ENCODE measurements at regions of chr19 and their contacts with region 1.

Region 1: GRCh38 chr19:45770192-45771101 is 1.4 kb upstream of the SIX5 start:
- DNase-seq: peak; percentile 86
- H3K4me3 ChIP-seq: peak overlapping the region; percentile 58
- CTCF ChIP-seq: peak; percentile 93

Region 2: GRCh38 chr19:45692187-45693105 is 78.0 kb before region 1 on chr19 and contains the start of gene QPCTL:
- CTCF ChIA-PET with region 1: interaction called, 30 read pairs
- POLR2A ChIA-PET with region 1: interaction called, 15 read pairs
- DNase-seq: peak; percentile 99
- H3K4me3 ChIP-seq: peak within 1 kb of the TSS; percentile 95
- CTCF ChIP-seq: no peak

Region 3: GRCh38 chr19:45730389-45731288 is 39.8 kb before region 1 on chr19 and contains the start of gene FBXO46:
- CTCF ChIA-PET with region 1: interaction called, 11 read pairs
- POLR2A ChIA-PET with region 1: interaction called, 6 read pairs
- DNase-seq: peak; percentile 90
- H3K4me3 ChIP-seq: peak within 1 kb of the TSS; percentile 88
- CTCF ChIP-seq: peak; percentile 43

Region 4: GRCh38 chr19:45792470-45793177 is 22.2 kb after region 1 on chr19 and contains the start of gene DMWD:
- CTCF ChIA-PET with region 1: interaction called, 170 read pairs
- POLR2A ChIA-PET with region 1: interaction called, 22 read pairs
- DNase-seq: peak; percentile 88
- H3K4me3 ChIP-seq: peak within 1 kb of the TSS; percentile 89
- CTCF ChIP-seq: no peak

Region 5: DNA sequence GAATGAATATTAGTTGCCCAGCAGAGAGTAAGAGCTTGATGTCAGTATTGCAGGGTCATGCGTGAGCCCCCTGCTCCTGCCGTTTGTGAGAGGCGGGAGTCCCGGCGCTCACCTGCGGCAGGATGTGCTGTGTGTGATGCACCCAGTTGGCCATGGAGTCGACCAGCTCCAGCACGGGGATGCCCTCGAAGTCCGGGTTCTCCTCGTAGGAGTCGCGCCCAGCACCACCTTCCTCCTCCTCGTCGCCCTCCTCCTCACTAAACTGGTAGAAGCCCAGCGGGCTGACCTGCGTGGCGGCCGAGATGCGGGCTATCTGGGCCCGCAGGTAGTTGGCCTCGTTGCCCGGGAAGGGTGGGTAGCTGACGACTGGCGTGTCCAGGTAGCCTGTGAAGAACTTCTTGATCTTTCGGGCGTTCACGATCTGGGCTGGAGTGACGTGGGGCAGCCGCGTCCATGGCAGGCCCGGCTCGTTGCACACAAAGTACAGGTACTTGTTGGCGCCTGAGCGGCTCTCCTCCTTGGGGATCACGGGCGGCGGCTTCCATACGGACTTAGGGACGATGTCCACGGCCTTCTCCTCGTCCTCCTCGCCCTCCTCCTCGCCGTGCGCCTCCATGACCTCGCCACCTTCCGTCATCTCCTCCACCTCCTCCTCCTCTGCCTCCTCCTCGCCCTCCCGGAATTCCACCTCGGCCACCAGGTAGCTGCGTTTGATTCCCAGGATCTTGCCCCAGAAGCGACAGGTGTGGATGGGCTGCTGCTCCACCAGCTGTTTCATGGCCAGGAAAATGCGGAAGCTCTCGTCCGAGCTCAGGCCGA is 33.9 kb after region 1 on chr19:
- CTCF ChIA-PET with region 1: interaction called, 170 read pairs
- POLR2A ChIA-PET with region 1: interaction called, 31 read pairs
- DNase-seq: no peak
- H3K4me3 ChIP-seq: no peak overlapping the region
- CTCF ChIP-seq: no peak

Region 6: GRCh38 chr19:45886427-45887199 is 116.2 kb after region 1 on chr19:
- CTCF ChIA-PET with region 1: interaction called, 11 read pairs
- POLR2A ChIA-PET with region 1: interaction called, 5 read pairs
- DNase-seq: peak; percentile 65
- H3K4me3 ChIP-seq: peak overlapping the region; percentile 78
- CTCF ChIP-seq: no peak